ENCODE measurements at regions of chr3 and their contacts with region 1.

Region 1: GRCh38 chr3:141011232-141011996 is 39.7 kb upstream of the SPSB4 start:
- DNase-seq: peak; percentile 56 to 72 (median 68)
- ATAC-seq: peak; percentile 73 to 81 (median 75)
- H3K4me3 ChIP-seq: no peak overlapping the region
- H3K27ac ChIP-seq: no peak overlapping the region
- H3K4me1 ChIP-seq: no peaks in the 10 kb centered on the region
- H3K27me3 ChIP-seq: peaks cover 0 to 14% of the 10 kb centered on the region in 2 donors
- CTCF ChIP-seq: peak; percentile 35 to 71 (median 66)
- POLR2A ChIP-seq: no peak

Region 2: GRCh38 chr3:140845882-140846281 is 165.5 kb before region 1 on chr3:
- intact Hi-C with region 1: no loop called
- DNase-seq: no peak
- ATAC-seq: no peak
- H3K4me3 ChIP-seq: no peak overlapping the region
- H3K27ac ChIP-seq: no peak overlapping the region
- H3K4me1 ChIP-seq: no peaks in the 10 kb centered on the region
- H3K27me3 ChIP-seq: no peaks in the 10 kb centered on the region
- CTCF ChIP-seq: no peak
- POLR2A ChIP-seq: no peak

Region 3: GRCh38 chr3:141192345-141192744 is 180.9 kb after region 1 on chr3:
- intact Hi-C with region 1: loop called in 1 of 2 experiments (anchors 10 kb)
- DNase-seq: peak; percentile 95 to 96 (median 96)
- ATAC-seq: peak; percentile 100
- H3K4me3 ChIP-seq: no peak overlapping the region
- H3K27ac ChIP-seq: no peak overlapping the region
- H3K4me1 ChIP-seq: no peaks in the 10 kb centered on the region
- H3K27me3 ChIP-seq: peaks cover 0 to 4% of the 10 kb centered on the region in 2 donors
- CTCF ChIP-seq: peak; percentile 98 to 99 (median 99)
- POLR2A ChIP-seq: no peak

Measured in right lobe of liver (tissue), 6 donors.